AG04449 (cell line): ENCODE measurements at regions of chr5 and their contacts with region 1.

Region 1: DNA sequence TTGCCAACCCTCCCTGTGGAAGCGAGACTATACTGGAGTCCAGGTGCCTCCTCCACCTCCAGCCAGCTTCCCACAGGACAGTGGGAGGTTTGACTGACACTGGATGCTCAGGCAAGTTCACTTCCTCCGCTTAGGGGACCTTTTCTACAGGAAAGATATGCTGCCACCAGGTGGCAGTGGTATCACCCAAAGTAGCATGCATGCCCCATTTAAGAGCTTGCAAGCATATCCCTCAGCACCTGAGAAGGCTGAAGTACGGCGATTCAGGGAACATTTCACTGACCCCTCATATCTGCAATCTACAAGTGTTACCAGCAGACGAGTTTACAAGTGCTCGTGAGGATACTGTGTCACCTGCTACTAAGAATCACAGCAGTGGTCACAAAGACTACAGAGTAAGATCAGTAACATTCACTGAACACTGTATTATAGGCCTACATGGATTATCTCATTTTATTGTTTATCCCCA is 75.5 kb downstream of the KLHL3 start:
- DNase-seq: peak; percentile 24
- H3K4me3 ChIP-seq: no peak overlapping the region
- CTCF ChIP-seq: peak; percentile 77

Region 2: GRCh38 chr5:137531266-137531665 is 129.1 kb before region 1 on chr5:
- CTCF ChIA-PET with region 1: no interaction called
- POLR2A ChIA-PET with region 1: no interaction called
- DNase-seq: no peak
- H3K4me3 ChIP-seq: no peak overlapping the region
- CTCF ChIP-seq: no peak

Region 3: GRCh38 chr5:137580030-137580429 is 80.4 kb before region 1 on chr5:
- CTCF ChIA-PET with region 1: no interaction called
- POLR2A ChIA-PET with region 1: no interaction called
- DNase-seq: no peak
- H3K4me3 ChIP-seq: no peak overlapping the region
- CTCF ChIP-seq: no peak

Region 4: DNA sequence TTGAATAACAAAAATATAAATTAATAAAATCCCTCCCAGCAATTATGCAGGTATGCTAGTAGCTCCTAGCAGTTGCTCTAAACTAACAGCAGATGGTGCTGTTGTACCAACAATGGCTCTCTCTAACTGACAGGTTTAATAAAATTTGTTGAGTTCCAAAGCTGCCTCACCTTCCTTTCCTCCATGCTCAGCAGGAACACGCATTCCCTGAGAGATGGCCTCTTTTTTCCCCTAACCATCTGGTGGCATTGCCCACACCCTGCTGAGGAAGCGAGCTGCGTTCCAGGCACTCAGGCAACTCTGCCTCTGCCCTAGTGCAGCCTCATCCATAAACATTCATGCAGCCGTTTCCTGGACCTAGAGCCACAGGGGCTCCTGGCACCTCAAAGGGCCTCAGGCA is 30.7 kb before region 1 on chr5:
- CTCF ChIA-PET with region 1: interaction called, 55 read pairs
- POLR2A ChIA-PET with region 1: no interaction called
- DNase-seq: no peak
- H3K4me3 ChIP-seq: no peak overlapping the region
- CTCF ChIP-seq: peak; percentile 60

Region 5: GRCh38 chr5:137641148-137641547 is 19.2 kb before region 1 on chr5:
- CTCF ChIA-PET with region 1: interaction called, 61 read pairs
- POLR2A ChIA-PET with region 1: no interaction called
- DNase-seq: no peak
- H3K4me3 ChIP-seq: no peak overlapping the region
- CTCF ChIP-seq: no peak

Region 6: DNA sequence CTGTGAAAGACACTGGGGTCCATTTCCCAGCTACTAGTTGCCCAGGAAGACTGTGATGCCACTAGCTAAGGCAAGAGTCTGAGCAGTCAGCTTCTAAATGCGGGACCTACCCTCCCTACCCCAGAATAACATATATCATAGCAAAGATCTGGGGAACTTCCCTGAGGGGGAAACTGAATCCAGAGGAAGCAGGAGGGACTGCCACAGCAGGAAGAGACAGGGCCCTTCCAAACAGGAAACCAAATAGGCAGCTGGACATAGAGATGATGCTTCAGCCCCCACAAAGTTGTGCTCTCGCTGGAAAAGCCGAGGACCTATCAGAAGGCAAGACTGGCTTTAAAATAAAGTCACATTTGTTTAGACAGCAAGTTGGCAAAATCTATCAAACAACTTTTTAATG is 24.4 kb after region 1 on chr5:
- CTCF ChIA-PET with region 1: interaction called, 29 read pairs
- POLR2A ChIA-PET with region 1: no interaction called
- DNase-seq: no peak
- H3K4me3 ChIP-seq: no peak overlapping the region
- CTCF ChIP-seq: no peak

Region 7: DNA sequence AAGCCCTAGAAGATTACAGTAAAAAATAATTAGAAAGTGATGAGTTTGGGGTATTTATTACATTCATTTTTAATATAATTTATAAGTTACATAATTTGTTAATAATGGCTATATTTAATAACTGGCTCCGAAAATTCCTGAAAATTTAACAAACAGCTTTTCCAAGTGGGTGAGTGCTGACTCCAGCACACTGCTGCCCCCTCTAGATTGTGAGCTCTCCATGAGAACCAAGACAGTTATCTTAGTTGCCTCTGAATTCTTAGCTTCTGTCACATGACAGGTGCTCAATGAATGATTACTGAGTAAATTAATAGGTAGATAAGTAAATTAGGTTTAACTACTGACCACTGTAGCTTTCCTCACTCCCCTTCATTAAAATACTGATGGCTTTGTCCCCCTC is 67.7 kb after region 1 on chr5:
- CTCF ChIA-PET with region 1: interaction called, 738 read pairs
- POLR2A ChIA-PET with region 1: no interaction called
- DNase-seq: no peak
- H3K4me3 ChIP-seq: no peak overlapping the region
- CTCF ChIP-seq: no peak

Region 8: DNA sequence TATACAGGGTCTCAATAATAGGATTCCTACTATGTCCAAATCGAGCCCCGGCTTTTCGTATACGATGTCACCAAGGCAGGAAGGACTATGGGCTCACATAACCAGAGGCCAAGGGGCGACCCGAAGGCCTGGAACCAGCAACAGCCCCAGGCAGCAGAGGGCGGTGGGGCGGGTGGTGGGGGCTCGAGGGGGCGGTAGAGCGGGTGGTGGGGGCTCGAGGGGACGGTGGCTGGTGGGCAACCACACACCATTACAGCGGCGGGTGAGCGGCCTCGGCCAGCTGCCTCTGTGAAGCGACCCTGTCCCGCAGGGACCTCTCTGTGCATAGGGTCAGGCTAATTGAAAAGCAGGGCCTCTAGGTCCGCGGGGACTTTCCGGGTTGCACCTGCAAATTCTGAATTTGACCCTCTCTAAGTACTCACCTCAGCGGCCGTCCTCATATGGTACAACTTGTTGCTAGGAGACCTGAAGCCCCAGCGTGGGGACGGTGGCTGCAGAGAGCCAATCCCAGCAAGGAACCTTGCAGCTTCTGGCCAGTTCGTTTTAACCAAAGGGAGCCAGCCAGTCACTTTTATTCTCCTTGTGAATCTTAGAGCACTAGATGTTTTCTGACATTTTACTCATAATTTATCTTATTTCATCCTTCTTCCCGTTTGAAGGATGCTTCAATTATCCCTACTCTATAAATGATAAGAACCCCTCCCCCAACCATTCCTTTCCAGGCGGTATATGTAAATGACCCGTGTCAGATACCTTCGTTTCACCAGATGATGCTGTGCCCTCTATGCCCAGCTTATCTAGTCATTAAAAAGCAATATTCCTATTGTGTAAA is 478.8 kb after region 1 on chr5 and contains the start of gene NME5:
- CTCF ChIA-PET with region 1: interaction called, 18 read pairs
- POLR2A ChIA-PET with region 1: no interaction called
- DNase-seq: no peak
- H3K4me3 ChIP-seq: peak within 1 kb of the TSS; percentile 49
- CTCF ChIP-seq: no peak